Psoas muscle (tissue), 8 donors: ENCODE measurements at regions of chr2 and their contacts with region 1.

Region 1: GRCh38 chr2:169562519-169562918 is 11.1 kb downstream of the FASTKD1 start:
- DNase-seq: no peak
- ATAC-seq: no peak
- H3K4me3 ChIP-seq: no peak overlapping the region
- H3K27ac ChIP-seq: no peak overlapping the region
- H3K4me1 ChIP-seq: no peaks in the 10 kb centered on the region
- H3K27me3 ChIP-seq: no peaks in the 10 kb centered on the region
- CTCF ChIP-seq: no peak

Region 2: GRCh38 chr2:169464882-169465281 is 97.6 kb before region 1 on chr2:
- intact Hi-C with region 1: loop called in 1 of 2 experiments (anchors 5 kb)
- DNase-seq: no peak
- ATAC-seq: peak in 1 of 4 donors; percentile 38
- H3K4me3 ChIP-seq: no peak overlapping the region
- H3K27ac ChIP-seq: no peak overlapping the region
- H3K4me1 ChIP-seq: no peaks in the 10 kb centered on the region
- H3K27me3 ChIP-seq: no peaks in the 10 kb centered on the region
- CTCF ChIP-seq: no peak